Caco-2 (cell line): ENCODE measurements at regions of chr5 and their contacts with region 1.

Region 1: DNA sequence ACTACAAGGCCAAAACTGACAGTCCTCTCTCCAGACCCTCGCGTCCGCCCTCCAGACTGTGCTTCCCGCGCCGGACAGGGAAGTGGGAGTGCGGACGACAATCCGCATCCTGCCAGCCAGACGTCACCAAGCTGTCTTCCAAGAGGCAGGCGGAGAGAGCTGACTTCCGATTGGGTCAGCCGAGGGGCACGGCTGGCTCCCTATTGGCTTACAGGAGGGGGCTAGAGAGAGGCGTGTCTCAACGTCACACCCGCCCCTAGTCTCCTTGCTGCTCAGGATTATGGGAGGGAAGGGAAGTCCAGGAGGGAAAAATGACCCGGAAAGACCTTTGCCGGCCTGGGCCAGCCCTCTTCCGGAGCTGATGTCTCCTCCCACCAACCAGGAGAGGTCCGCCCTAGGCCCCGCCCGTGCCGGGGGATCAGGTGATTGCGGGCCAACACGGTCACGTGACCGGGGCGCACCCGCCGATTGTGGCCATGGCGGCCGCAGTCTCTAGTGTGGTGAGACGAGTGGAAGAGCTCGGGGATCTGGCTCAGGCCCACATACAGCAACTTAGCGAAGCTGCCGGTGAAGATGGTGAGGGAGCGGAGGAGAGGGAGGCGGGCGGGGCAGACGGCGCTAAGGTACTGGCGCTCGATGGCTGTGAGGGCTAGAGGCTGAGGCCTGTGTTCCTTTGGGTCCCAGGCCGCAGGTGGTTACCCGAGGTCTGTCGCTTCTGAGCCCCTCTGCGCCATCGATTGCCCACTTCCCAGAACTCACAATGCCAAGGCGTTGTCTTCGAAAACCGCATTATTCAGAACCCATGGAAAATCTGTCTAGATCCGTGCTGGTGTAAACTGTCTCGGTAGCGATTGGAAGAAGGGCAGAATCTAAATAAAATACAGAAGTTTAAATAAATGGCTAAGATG is at the start of gene RIMOC1:
- DNase-seq: peak; percentile 99
- H3K4me3 ChIP-seq: peak within 1 kb of the TSS; percentile 100
- H3K4me3 Mint-ChIP-seq: peak within 1 kb of the TSS; percentile 91
- H3K27ac Mint-ChIP-seq: peak within 1 kb of the TSS; percentile 97
- H3K4me1 ChIP-seq: no peaks in the 10 kb centered on the region
- H3K4me1 Mint-ChIP-seq: no peaks in the 10 kb centered on the region
- H3K27me3 ChIP-seq: no peaks in the 10 kb centered on the region
- H3K27me3 Mint-ChIP-seq: no peaks in the 10 kb centered on the region
- CTCF ChIP-seq: no peak
- total RNA-seq, gene RIMOC1: 29.5 and 30.2 TPM in 2 replicates

Region 2: DNA sequence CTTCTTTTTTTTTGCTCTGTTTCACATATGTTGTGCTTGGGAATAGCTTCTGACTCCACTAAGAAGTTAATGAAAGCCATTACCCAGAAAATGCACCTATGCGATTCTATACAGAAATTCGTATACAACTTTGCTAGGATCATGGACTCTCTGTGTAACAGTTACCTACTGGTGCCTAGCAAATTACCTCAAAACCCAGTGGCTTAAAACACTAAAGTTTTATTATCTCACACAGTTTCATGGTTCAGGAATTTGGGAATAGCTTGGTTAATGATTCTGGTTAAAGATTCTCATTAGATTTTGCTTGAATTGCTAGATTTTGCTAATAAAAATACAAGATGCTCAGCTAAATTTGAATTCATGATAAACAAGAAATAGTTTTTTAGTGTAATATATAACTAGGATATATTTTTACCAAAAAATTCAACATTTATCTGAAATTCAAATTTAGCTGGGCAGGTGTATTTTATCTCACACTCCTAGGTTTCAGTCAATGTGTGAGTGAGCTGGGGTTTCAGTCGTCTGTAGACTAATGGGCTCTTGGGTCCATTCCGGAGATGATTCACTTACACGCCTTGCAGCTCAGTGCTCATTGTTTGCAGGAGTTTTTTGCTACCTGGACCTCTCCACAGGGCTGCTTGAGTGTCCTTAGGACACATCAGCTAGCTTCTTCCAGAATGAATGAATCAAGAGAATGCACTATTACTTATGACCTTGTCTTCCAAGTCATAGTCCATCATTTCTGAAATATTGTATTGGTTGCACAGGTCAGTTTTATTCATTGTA is 908.2 kb before region 1 on chr5:
- CTCF ChIA-PET with region 1: no interaction called
- POLR2A ChIA-PET with region 1: no interaction called
- intact Hi-C with region 1: no loop called
- DNase-seq: no peak
- H3K4me3 ChIP-seq: no peak overlapping the region
- H3K4me3 Mint-ChIP-seq: no peak overlapping the region
- H3K27ac Mint-ChIP-seq: no peak overlapping the region
- H3K4me1 ChIP-seq: no peaks in the 10 kb centered on the region
- H3K4me1 Mint-ChIP-seq: no peaks in the 10 kb centered on the region
- H3K27me3 ChIP-seq: no peaks in the 10 kb centered on the region
- H3K27me3 Mint-ChIP-seq: peaks cover 9% of the 10 kb centered on the region
- CTCF ChIP-seq: no peak

Region 3: DNA sequence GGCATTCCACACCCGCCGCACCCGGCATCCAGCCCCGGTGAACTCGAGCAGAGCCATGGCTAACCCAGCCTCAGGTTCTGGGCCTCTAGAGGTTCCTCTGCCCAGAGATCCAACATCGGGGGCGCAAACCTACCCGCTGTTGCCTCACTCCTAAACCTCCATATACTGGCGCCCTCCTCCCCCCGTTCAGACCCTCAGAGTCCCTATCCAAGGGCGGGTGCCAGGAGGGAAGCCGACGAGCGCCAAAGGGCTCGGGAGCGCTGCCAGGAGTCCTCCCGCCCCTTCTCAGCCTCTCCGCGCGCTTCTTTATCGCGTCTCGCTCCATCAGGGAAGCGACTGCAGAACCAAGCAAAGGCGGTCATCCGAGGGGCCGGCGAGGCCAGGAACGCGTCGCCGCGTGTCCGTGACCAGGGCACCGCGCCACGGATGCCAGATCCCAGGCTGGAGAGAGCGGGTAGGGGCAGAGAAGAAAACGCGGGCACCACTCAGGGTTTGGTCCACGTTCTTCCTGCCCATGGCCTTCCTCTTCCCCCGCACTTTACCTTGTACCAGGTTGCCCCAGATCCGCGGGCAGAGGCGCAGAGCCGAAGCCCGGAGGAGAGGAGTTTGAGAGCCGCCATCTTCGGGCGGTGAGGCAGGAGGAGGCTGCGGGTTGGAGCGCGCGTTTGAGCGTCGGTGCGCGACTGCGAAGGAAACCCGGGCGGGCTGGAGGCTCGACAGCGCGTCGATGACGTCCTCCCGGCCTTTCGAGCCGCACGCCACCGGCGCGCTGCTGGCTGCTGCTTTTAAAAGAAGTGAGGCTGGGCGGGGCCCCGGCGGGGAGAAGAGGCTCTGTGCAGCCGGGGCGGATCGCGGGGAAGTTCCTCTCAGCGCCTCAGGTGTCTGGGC is 34.2 kb before region 1 on chr5 and contains the start of gene OXCT1:
- CTCF ChIA-PET with region 1: interaction called, 3 read pairs
- POLR2A ChIA-PET with region 1: interaction called, 4 read pairs
- intact Hi-C with region 1: loop called (anchors 1 kb)
- DNase-seq: peak; percentile 73 to 82
- H3K4me3 ChIP-seq: peak within 1 kb of the TSS; percentile 64
- H3K4me3 Mint-ChIP-seq: peak within 1 kb of the TSS; percentile 74
- H3K27ac Mint-ChIP-seq: peak within 1 kb of the TSS; percentile 62
- H3K4me1 ChIP-seq: peaks cover 4% of the 10 kb centered on the region; the same call in 1 of the 2 replicates
- H3K4me1 Mint-ChIP-seq: peaks cover 7% of the 10 kb centered on the region
- H3K27me3 ChIP-seq: no peaks in the 10 kb centered on the region
- H3K27me3 Mint-ChIP-seq: no peaks in the 10 kb centered on the region
- CTCF ChIP-seq: no peak
- total RNA-seq, gene OXCT1: 20.6 and 22.5 TPM in 2 replicates

Region 4: DNA sequence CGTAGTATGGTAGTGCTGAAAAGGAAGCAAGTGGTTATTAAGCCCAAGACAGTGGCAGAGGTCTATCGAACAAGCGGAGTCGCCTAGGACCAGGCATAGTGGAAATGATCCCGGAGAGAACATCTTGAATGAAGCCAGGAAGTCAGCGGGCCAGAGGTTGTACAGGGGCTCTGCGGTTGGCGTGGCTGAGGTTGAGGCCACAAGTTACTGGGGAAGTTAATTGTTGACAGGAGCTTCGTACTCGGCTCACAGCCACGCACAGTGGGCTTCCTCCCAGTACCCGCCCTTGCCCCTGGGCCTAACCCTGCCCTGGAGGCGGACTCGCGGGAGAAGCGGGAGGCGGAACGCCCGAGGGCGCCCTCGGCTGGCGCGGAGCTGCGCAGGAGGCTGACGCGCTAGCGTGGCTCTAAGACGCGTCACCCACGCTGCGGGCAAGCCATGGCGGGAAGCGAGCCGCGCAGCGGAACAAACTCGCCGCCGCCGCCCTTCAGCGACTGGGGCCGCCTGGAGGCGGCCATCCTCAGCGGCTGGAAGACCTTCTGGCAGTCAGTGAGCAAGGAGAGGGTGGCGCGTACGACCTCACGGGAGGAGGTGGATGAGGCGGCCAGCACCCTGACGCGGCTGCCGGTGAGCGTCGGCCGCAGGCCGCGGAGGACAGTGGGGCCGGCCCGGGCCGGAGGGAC is 20.9 kb after region 1 on chr5 and contains the start of gene FBXO4:
- CTCF ChIA-PET with region 1: interaction called, 3 read pairs
- POLR2A ChIA-PET with region 1: interaction called, 22 read pairs
- intact Hi-C with region 1: loop called (anchors 1 kb)
- DNase-seq: peak; percentile 87
- H3K4me3 ChIP-seq: peak within 1 kb of the TSS; percentile 71
- H3K4me3 Mint-ChIP-seq: peak within 1 kb of the TSS; percentile 87
- H3K27ac Mint-ChIP-seq: peak within 1 kb of the TSS; percentile 92
- H3K4me1 ChIP-seq: peaks cover 7% of the 10 kb centered on the region
- H3K4me1 Mint-ChIP-seq: no peaks in the 10 kb centered on the region
- H3K27me3 ChIP-seq: no peaks in the 10 kb centered on the region
- H3K27me3 Mint-ChIP-seq: no peaks in the 10 kb centered on the region
- CTCF ChIP-seq: peak; percentile 36 to 81
- total RNA-seq, gene FBXO4: 8.1 and 9.7 TPM in 2 replicates